ENCODE measurements at regions of chr2 and their contacts with region 1.

Region 1: DNA sequence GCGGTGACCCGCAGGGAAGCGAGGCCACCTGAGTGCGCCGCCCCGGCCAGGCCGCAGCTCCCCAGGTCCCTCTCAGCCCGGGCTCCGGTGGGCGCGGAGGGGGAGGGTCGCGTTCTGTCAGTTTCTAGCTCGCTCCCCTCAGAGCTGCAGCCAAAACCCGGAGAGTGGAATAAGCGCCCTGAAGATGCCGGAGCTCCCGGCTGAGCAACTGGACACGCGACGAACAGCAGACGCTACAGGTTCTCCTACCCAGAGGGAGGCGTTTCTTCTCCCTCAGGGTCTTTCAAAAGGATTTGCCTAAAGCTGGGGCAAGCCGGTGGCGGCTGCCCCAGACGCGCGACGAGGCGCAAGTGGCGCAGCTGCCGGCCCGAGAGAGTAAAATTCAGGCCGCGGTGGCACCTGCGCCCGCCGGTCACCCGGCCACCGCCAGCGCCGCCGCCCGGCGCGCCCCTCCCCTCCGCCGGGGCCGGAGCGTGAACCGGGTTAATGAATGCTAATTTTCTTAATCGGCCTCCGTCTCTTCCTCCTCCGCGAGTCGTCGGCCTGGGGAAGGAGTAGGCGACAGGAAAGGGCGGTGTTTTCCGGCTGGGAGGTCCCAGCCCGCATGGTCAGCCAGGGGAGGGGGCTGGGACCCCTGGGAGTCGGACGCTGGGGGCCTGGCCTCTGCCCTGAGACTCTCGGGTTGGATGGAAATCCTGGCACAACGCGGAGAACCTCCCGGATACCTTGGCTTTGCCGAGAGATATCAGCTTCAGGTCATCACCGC is 845 bp upstream of the CDC42EP3 start:
- DNase-seq: peak; percentile 39 to 82 (median 62)
- ATAC-seq: peak; percentile 32 to 38
- H3K4me3 Mint-ChIP-seq: peak overlapping the region; percentile 82 to 96 (median 90)
- H3K27ac Mint-ChIP-seq: peak overlapping the region; percentile 64 to 93 (median 90)
- H3K4me1 Mint-ChIP-seq: peaks cover 23 to 57% (median 49%) of the 10 kb centered on the region in 4 donors
- H3K27me3 Mint-ChIP-seq: no peaks in the 10 kb centered on the region

Region 2: DNA sequence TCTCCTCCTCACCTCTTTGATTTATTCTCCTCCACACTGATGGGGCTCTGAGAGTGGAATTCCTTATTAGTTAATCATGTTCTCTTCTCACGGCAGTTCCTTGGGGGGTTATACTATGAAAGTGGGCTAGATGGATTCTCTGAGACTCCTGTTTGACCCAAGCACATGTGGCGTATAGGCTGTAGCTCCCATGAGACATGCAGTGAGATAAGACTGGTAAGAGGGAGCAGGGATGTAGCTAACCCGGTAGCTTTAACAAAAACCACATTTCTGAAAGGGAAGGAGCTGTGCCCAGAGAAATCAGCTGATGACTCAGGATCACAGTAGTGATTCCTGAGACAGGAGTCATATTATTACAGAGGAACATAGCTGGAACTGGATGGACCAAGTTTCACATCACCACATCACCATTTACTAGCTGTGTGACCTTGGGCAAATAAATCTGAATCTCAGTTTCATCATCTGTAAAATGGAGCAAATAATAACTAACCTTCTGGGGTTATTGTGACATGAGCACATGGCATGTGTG is 1233.8 kb before region 1 on chr2:
- POLR2A ChIA-PET with region 1: no interaction called
- DNase-seq: no peak
- ATAC-seq: no peak
- H3K4me3 Mint-ChIP-seq: no peak overlapping the region
- H3K27ac Mint-ChIP-seq: no peak overlapping the region
- H3K4me1 Mint-ChIP-seq: peaks cover 3 to 13% (median 8%) of the 10 kb centered on the region in 4 donors
- H3K27me3 Mint-ChIP-seq: peaks cover 0 to 6% (median 0%) of the 10 kb centered on the region in 5 donors

Region 3: GRCh38 chr2:37414470-37414949 is 257.8 kb before region 1 on chr2:
- POLR2A ChIA-PET with region 1: interaction called, 11 read pairs
- DNase-seq: peak in 4 of 10 donors; percentile 18 to 61 (median 56)
- ATAC-seq: peak; percentile 73 to 82
- H3K4me3 Mint-ChIP-seq: peak overlapping the region in 2 of 10 donors; percentile 5 to 9
- H3K27ac Mint-ChIP-seq: peak overlapping the region in 2 of 10 donors; percentile 4 to 46
- H3K4me1 Mint-ChIP-seq: peaks cover 7 to 13% (median 11%) of the 10 kb centered on the region in 4 donors
- H3K27me3 Mint-ChIP-seq: peaks cover 0 to 6% (median 0%) of the 10 kb centered on the region in 5 donors

Region 4: DNA sequence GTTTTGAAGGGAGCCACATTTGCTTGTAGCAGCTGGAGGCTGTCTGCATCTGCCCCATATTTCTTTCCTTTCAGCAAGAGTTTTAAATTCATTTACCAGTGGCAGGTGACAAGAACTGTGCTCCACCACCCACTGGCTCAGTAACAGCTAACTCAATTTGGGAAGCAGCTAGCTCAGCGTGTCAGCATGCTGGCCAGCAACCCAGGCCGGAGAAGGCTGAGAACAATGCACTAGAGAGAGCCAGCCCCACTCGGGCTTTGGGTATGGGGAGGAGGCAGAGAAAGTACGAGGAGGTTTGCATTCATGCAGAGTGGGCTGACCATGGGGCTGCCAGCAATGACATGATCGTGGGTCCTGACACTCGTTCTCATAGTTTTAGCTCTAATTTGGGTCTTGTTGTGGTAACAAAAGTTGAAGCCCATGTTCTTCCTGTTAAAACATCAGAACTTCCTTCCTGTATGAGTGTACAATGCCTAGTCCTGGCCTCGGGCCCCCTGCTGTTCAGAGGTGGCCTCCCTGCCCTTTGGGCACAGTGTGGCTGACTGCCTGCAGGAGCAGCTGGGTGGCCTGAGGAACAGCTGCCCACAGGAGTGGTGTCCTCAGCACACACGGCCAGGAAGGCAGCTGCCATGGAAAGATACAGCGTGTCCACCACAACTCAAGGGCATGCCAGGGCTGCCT is 23.8 kb before region 1 on chr2:
- POLR2A ChIA-PET with region 1: interaction called, 15 read pairs
- DNase-seq: peak in 5 of 10 donors; percentile 32 to 50 (median 34)
- ATAC-seq: peak; percentile 70 to 79
- H3K4me3 Mint-ChIP-seq: peak overlapping the region; percentile 42 to 87 (median 72)
- H3K27ac Mint-ChIP-seq: peak overlapping the region; percentile 87 to 97 (median 94)
- H3K4me1 Mint-ChIP-seq: peaks cover 50 to 94% (median 92%) of the 10 kb centered on the region in 4 donors
- H3K27me3 Mint-ChIP-seq: no peaks in the 10 kb centered on the region

Region 5: DNA sequence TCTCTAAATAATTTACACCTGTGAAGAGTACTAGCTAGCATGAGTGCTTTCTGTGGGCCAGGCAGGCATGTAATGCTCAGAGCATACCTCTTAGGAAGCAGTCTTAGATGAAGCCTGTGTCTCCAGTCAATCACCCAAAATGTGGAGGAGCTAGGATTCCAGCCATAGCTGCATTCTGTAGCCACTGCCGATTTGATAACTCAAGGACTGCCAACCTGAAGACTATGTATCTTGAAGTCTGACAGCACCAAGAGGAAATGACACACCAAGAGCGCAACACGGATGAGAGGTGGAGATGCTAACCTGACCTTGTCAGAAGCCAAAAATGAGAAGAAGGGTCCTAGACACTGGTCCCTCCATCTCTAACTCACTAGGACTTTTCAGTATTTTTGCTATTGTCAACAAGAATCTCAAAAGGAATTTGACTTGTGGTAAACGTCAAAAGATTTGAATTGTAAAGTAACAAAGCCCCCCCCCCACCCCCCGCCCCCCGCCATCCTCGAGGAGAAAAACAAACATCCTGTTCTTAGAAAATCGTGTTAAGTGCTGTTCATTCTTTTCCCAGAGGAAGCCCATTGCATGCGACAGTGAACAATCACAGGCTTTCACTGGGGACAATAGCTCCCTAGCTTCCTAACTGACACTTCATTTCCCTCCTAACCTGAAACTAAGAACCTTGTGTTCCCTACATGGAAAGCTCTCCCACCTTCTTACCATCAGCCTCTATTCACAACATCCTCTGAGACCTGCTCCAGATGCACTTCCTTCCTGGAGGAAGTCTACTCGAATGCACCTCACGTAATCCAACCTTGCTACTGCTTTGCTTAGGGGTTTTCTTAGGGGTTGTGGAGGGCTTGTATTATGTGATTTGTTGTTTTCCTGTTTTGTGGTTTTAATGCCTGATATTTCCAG is 15.5 kb before region 1 on chr2:
- POLR2A ChIA-PET with region 1: interaction called, 24 read pairs
- DNase-seq: peak in 3 of 10 donors; percentile 31 to 46 (median 41)
- ATAC-seq: peak; percentile 62 to 72
- H3K4me3 Mint-ChIP-seq: peak overlapping the region; percentile 43 to 81 (median 66)
- H3K27ac Mint-ChIP-seq: peak overlapping the region; percentile 88 to 95 (median 92)
- H3K4me1 Mint-ChIP-seq: peaks cover 63 to 100% (median 95%) of the 10 kb centered on the region in 4 donors
- H3K27me3 Mint-ChIP-seq: no peaks in the 10 kb centered on the region

Region 6: GRCh38 chr2:37740164-37740739 is 68.0 kb after region 1 on chr2:
- POLR2A ChIA-PET with region 1: no interaction called
- DNase-seq: no peak
- ATAC-seq: no peak
- H3K4me3 Mint-ChIP-seq: no peak overlapping the region
- H3K27ac Mint-ChIP-seq: no peak overlapping the region
- H3K4me1 Mint-ChIP-seq: peaks cover 0 to 2% (median 0%) of the 10 kb centered on the region in 4 donors
- H3K27me3 Mint-ChIP-seq: no peaks in the 10 kb centered on the region

Region 7: DNA sequence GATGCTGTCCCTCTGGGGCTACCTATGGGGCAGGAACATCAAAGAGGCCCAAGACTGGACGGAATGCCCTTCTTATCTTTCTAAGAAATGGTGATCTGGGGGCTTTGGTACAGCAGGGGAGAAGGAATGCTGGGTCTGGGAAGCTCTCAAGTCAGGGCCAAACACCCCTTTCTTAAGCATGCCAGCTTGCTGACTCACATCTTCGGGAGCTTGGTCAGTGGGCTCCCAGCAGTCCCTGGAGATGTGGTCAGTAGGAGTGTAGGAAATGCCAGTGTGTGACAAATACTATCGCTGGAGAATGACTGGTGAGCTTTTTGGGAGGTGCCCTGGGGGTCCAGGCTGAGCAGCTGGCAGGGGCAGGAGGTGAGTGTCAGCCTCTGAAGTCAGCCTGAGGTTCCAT is 104.2 kb after region 1 on chr2:
- POLR2A ChIA-PET with region 1: no interaction called
- DNase-seq: no peak
- ATAC-seq: no peak
- H3K4me3 Mint-ChIP-seq: no peak overlapping the region
- H3K27ac Mint-ChIP-seq: peak overlapping the region in 2 of 10 donors; percentile 40 to 59
- H3K4me1 Mint-ChIP-seq: no peaks in the 10 kb centered on the region
- H3K27me3 Mint-ChIP-seq: peaks cover 0 to 4% (median 0%) of the 10 kb centered on the region in 5 donors

Measured in naive thymus-derived CD8-positive, alpha-beta T cell (primary cell).